Dorsolateral prefrontal cortex (tissue), 120 donors: ENCODE measurements at regions of chr19 and their contacts with region 1.

Region 1: GRCh38 chr19:39846176-39846677 is at the start of gene FBL:
- DNase-seq: peak; percentile 91 to 97 (median 94)
- H3K4me3 ChIP-seq: peak within 1 kb of the TSS; percentile 60 to 99 (median 89)
- H3K27ac ChIP-seq: peak within 1 kb of the TSS; percentile 27 to 96 (median 85)
- H3K27me3 ChIP-seq: no peaks in the 10 kb centered on the region
- CTCF ChIP-seq: peak in 32 of 56 donors; percentile 5 to 55 (median 21)
- total RNA-seq, gene FBL: 43.4 to 102 (median 66.4) TPM

Region 2: DNA sequence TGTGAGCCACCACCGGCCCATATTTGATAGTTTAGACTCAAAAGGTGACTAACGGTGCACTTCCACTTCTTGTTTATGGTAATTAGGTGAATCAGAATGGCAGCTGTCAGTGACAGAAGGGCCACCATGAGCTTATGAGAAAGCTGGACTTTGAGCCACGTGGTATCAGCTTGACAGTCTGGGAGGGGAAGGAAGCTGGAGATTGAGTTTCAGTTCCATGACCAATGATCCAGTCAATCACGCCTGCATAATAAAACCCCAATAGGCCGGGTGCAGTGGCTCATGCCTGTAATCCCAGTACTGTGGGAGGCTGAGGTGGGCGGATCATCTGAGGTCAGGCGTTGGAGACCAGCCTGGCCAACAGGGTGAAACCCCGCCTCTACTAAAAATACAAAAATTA is 321.7 kb before region 1 on chr19:
- intact Hi-C with region 1: no loop called
- DNase-seq: peak in 1 of 10 donors; percentile 9
- H3K4me3 ChIP-seq: no peak overlapping the region
- H3K27ac ChIP-seq: no peak overlapping the region
- H3K27me3 ChIP-seq: no peaks in the 10 kb centered on the region
- CTCF ChIP-seq: no peak

Region 3: DNA sequence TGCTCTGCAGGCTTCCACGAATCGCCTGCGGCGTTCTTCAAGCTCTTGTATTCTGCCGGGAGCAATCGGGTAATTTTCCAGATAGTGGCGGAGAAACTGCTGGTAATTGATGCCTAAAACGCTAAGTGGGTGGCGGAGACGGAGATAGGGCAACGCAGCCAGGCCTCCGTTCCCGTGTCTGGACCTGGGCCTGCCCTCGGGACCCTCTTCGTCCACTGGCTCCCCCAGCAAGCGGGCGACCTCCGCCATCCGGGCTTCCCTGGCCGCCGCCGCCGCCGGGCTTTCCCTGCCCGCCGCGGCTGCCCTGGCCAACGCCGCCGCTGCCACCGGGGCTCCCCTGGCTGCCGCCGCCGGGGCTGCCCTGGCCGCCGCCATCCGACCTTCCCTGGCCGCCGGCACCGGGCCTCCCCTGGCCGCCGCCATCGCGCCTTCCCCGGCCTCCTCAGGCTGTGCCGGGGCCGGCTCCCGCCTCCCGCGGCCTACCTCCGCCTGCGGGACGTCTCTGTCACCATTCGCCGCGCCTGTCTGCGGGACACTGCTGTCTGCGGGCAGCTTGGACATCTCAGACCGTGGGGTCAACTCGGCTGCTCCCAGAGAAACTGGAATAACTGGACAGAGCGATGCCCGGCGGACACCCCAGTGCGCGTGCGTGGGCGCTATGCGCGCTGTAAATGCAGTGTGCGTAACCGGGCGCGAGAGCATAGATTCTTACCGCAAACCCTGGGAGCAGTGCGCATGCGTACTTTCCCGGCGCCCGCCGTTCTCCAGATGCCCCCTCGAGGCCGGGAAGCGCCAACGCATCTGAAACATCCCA is 306.5 kb before region 1 on chr19 and contains the start of gene EID2:
- intact Hi-C with region 1: loop called (anchors 10 kb)
- DNase-seq: peak; percentile 93 to 97 (median 94)
- H3K4me3 ChIP-seq: peak within 1 kb of the TSS; percentile 53 to 96 (median 83)
- H3K27ac ChIP-seq: peak within 1 kb of the TSS; percentile 75 to 99 (median 94)
- H3K27me3 ChIP-seq: no peaks in the 10 kb centered on the region
- CTCF ChIP-seq: peak; percentile 66 to 99 (median 96)
- total RNA-seq, gene EID2: 12.7 to 42.3 (median 28.5) TPM

Region 4: GRCh38 chr19:39792999-39793546 is 53.2 kb before region 1 on chr19:
- intact Hi-C with region 1: loop called in 1 of 2 experiments (anchors 2 kb)
- DNase-seq: peak; percentile 6 to 75 (median 62)
- H3K4me3 ChIP-seq: peak overlapping the region; percentile 24 to 71 (median 57)
- H3K27ac ChIP-seq: peak overlapping the region in 3 of 59 donors; percentile 20 to 71 (median 52)
- H3K27me3 ChIP-seq: peaks cover 0 to 4% (median 0%) of the 10 kb centered on the region in 45 donors
- CTCF ChIP-seq: peak; percentile 48 to 93 (median 83)

Region 5: DNA sequence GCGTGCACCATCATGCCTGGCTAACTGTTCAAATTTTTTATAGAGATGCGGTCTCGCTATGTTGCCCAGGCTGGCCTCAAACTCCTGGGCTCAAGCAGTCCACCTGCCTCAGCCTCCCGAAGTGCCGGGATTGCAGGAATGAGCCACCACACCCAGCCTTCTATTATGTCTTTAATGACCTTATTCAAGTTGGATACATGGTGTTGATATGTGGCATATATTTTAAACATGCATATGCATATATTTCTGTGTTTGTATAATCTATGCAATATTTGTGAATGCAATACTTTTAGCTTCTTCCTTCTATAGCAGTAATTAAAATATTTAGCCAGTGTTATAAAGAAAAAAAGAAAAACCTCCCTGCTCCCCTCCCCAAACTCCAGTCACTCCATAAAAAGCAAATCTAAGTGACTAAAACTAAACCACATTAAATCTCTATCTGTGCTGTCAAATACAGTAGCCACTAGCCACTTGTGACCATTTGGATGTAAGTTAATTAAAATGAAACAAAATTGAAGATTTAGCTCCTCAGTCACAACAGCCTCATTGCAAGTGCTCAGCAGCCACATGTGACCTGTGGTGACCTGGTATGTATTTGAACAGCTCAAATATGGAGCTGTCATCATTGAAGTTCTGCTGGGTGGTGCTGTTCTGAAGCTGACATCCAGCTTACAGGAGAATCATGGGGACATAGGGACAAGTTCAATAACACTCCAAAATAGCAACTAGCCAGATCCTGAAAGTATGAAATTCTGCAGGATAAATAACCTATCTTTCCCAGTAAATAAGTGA is 60.8 kb after region 1 on chr19:
- intact Hi-C with region 1: no loop called
- DNase-seq: no peak
- H3K4me3 ChIP-seq: no peak overlapping the region
- H3K27ac ChIP-seq: no peak overlapping the region
- H3K27me3 ChIP-seq: no peaks in the 10 kb centered on the region
- CTCF ChIP-seq: no peak